RWPE1 (cell line): ENCODE measurements at regions of chr6 and their contacts with region 1.

Region 1: DNA sequence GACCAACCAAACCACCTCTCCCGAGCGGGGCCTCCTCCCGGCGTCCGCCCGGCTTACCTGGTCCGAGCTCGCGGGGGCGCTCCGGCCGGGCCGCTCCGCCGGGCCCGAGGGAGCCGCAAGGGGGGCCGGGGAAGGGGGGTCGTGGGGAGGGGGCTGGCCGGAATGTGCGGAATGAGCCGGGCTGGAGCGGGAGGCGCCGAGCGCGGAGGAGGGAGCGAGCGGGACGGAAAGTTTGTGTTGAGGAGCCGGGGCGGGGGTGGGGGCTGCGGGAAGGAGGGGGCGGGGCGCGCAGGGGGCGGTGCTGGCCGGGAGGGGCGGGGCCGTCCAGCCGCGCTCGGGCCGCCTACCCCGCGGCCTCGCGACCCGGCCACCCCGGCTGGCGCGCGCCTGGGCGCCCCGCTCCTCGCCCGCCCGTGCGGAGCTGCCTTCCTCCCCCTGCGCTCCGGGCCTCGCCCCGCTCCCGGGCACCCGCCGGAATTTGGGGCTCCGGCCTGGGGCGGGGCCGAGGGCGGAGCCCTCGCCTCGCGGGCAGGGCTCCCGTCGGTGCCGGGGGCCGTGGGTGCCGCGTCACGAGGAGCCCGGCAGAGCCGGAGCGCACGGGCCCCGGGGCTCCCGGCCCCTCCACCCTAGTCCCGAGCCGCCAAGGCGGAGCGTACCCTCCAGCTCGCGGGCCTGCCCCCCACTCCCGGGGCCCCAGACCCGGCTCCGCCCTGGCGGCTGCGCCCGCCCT is at the start of gene TEAD3:
- DNase-seq: peak; percentile 92
- H3K27ac ChIP-seq: peak within 1 kb of the TSS; percentile 99
- CTCF ChIP-seq: no peak; the same call in 1 of the 2 replicates

Region 2: GRCh38 chr6:35485402-35485877 is 11.6 kb before region 1 on chr6:
- CTCF ChIA-PET with region 1: interaction called, 7 read pairs
- POLR2A ChIA-PET with region 1: interaction called, 11 read pairs
- DNase-seq: peak; percentile 91
- H3K27ac ChIP-seq: peak overlapping the region; percentile 99
- CTCF ChIP-seq: no peak

Region 3: GRCh38 chr6:35552285-35552917 is 55.4 kb after region 1 on chr6:
- CTCF ChIA-PET with region 1: no interaction called
- POLR2A ChIA-PET with region 1: interaction called, 11 read pairs
- DNase-seq: no peak
- H3K27ac ChIP-seq: no peak overlapping the region
- CTCF ChIP-seq: peak; percentile 56